Activated T-helper 2 cell treated with anti-CD3 and anti-CD28 coated beads, Interferon-gamma antibody, Interleukin-2, Interleukin-4, amounts not matched to agents 10 μg/mL and 5 μg/mL and 100 μg/mL, durations not matched to agents 14 hours and 24 hours and 36 hours (primary cell): ENCODE measurements at regions of chr3 and their contacts with region 1.

Region 1: DNA sequence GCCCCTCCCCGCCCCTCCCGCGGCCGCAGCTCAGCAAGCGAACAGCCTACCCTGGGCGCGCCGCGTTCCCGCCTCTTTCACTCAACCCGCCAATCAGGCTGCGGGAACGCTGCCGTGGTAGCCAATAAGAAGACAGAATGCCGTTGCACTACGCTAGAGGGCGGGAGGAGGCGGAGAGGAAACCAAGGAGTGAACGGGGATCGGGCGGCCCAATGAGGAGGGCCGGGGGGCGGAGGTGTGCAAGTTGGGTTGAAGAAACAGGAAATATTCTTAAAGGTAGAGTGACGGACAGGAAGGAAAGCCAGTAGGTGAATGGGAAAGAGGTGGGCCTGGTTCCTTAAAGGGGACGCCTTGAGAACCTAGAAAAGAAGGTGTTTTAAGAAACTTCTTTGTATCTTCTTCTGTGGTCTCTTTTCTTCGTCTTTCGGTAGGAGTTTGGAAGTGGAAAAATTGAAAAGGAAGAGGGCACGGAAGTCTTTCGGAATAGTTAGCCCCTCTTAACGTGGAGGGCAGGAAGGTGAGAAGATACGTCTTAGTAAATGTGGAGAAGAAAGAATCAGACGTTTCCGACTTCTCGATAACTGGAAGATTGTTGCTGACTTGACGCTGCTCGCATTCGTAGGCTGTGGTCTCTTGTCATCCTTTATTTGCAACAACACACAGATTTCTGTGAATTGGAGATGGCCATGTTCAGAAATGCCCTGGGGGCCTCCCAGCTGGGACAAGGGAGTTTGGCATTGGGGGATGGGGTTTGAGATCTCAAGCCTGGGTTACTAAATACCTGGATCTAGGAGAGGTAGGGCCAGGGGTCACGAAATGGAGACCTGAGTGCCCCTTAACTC is 437 bp upstream of the USF3 start:
- DNase-seq: peak; percentile 99
- H3K4me3 Mint-ChIP-seq: no peak overlapping the region
- H3K27ac Mint-ChIP-seq: no peak overlapping the region
- H3K4me1 Mint-ChIP-seq: peaks cover 20% of the 10 kb centered on the region
- H3K27me3 Mint-ChIP-seq: no peaks in the 10 kb centered on the region

Region 2: GRCh38 chr3:113039546-113039945 is 657.3 kb before region 1 on chr3:
- intact Hi-C with region 1: no loop called
- DNase-seq: no peak
- H3K4me3 Mint-ChIP-seq: no peak overlapping the region
- H3K27ac Mint-ChIP-seq: no peak overlapping the region
- H3K4me1 Mint-ChIP-seq: no peaks in the 10 kb centered on the region
- H3K27me3 Mint-ChIP-seq: no peaks in the 10 kb centered on the region

Region 3: GRCh38 chr3:113514265-113514769 is 182.6 kb before region 1 on chr3:
- intact Hi-C with region 1: loop called (anchors 2 kb)
- DNase-seq: no peak
- H3K4me3 Mint-ChIP-seq: no peak overlapping the region
- H3K27ac Mint-ChIP-seq: no peak overlapping the region
- H3K4me1 Mint-ChIP-seq: peaks cover 7% of the 10 kb centered on the region
- H3K27me3 Mint-ChIP-seq: peaks cover 19% of the 10 kb centered on the region

Region 4: GRCh38 chr3:113606539-113607218 is 90.2 kb before region 1 on chr3:
- intact Hi-C with region 1: loop called (anchors 2 kb)
- DNase-seq: peak; percentile 39
- H3K4me3 Mint-ChIP-seq: peak overlapping the region; percentile 33
- H3K27ac Mint-ChIP-seq: peak overlapping the region; percentile 60
- H3K4me1 Mint-ChIP-seq: peaks cover 24% of the 10 kb centered on the region
- H3K27me3 Mint-ChIP-seq: no peaks in the 10 kb centered on the region

Region 5: GRCh38 chr3:113745273-113746068 is 48.6 kb after region 1 on chr3:
- intact Hi-C with region 1: loop called (anchors 1 kb)
- DNase-seq: peak; percentile 73
- H3K4me3 Mint-ChIP-seq: peak overlapping the region; percentile 96
- H3K27ac Mint-ChIP-seq: peak overlapping the region; percentile 100
- H3K4me1 Mint-ChIP-seq: peaks cover 64% of the 10 kb centered on the region
- H3K27me3 Mint-ChIP-seq: peaks cover 3% of the 10 kb centered on the region

Region 6: GRCh38 chr3:114056130-114057010 is 359.5 kb after region 1 on chr3 and contains the starts of genes CCDC191 and QTRT2:
- intact Hi-C with region 1: loop called (anchors 1 kb)
- DNase-seq: peak; percentile 98
- H3K4me3 Mint-ChIP-seq: peak within 1 kb of the TSS; percentile 91
- H3K27ac Mint-ChIP-seq: peak within 1 kb of the TSS; percentile 89
- H3K4me1 Mint-ChIP-seq: peaks cover 22% of the 10 kb centered on the region
- H3K27me3 Mint-ChIP-seq: no peaks in the 10 kb centered on the region
- total RNA-seq, gene CCDC191: 0.68 and 0.76 TPM in 2 replicates
- total RNA-seq, gene QTRT2: 40.2 and 41.3 TPM in 2 replicates